Endothelial cell of umbilical vein (primary cell): ENCODE measurements at regions of chr14 and their contacts with region 1.

Region 1: DNA sequence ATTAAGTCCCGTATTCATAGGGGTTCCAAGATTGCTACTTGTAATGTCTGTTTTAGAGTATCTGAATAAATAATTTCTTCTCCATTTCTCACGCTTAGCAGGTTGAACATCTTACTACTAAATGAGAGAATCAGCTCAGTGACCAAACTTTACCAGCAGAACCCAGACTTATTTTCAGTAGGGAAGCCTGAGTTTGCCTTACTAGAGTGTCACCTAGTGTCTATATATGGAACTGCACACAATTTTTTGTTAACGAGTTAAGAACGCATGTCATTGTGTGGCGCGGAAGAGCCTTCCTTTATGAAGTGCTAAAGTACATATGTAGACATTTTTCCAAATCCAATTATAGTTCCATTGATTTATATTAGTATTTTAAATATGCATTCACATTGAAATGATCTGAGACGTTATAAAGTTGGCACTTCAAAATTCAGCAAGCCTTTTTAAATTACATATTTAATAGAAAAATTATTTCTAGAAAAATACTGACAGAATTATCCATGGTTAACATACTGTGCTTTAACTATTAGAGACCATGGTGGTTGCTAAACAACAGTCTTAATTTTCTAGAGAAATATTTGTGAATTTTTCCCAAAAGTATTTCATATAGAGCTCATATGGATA is 88.3 kb downstream of the RPS29 start:
- DNase-seq: peak; percentile 78
- H3K4me3 ChIP-seq: no peak overlapping the region
- H3K27ac ChIP-seq: no peak overlapping the region
- H3K4me1 ChIP-seq: no peaks in the 10 kb centered on the region
- H3K27me3 ChIP-seq: peaks cover 7 to 9% of the 10 kb centered on the region in 2 experiments
- CTCF ChIP-seq: peak; percentile 53 to 63
- POLR2A ChIP-seq: no peak

Region 2: GRCh38 chr14:48350971-48351370 is 1146.9 kb before region 1 on chr14:
- CTCF ChIA-PET with region 1: no interaction called
- POLR2A ChIA-PET with region 1: no interaction called
- dilution Hi-C with region 1: no loop called
- intact Hi-C with region 1: no loop called
- DNase-seq: no peak
- H3K4me3 ChIP-seq: no peak overlapping the region
- H3K27ac ChIP-seq: no peak overlapping the region
- H3K4me1 ChIP-seq: no peaks in the 10 kb centered on the region
- H3K27me3 ChIP-seq: no peaks in the 10 kb centered on the region
- CTCF ChIP-seq: no peak
- POLR2A ChIP-seq: no peak

Region 3: GRCh38 chr14:49173765-49174373 is 324.0 kb before region 1 on chr14:
- CTCF ChIA-PET with region 1: no interaction called
- POLR2A ChIA-PET with region 1: no interaction called
- dilution Hi-C with region 1: no loop called
- intact Hi-C with region 1: no loop called
- DNase-seq: peak; percentile 55
- H3K4me3 ChIP-seq: no peak overlapping the region
- H3K27ac ChIP-seq: no peak overlapping the region
- H3K4me1 ChIP-seq: no peaks in the 10 kb centered on the region
- H3K27me3 ChIP-seq: no peaks in the 10 kb centered on the region
- CTCF ChIP-seq: peak; percentile 42 to 59
- POLR2A ChIP-seq: no peak

Region 4: GRCh38 chr14:49485290-49485689 is 12.5 kb before region 1 on chr14:
- CTCF ChIA-PET with region 1: interaction called, 18 read pairs
- POLR2A ChIA-PET with region 1: no interaction called
- dilution Hi-C with region 1: no loop called
- intact Hi-C with region 1: no loop called
- DNase-seq: no peak
- H3K4me3 ChIP-seq: no peak overlapping the region
- H3K27ac ChIP-seq: no peak overlapping the region
- H3K4me1 ChIP-seq: no peaks in the 10 kb centered on the region
- H3K27me3 ChIP-seq: peaks cover 8 to 13% of the 10 kb centered on the region in 2 experiments
- CTCF ChIP-seq: no peak
- POLR2A ChIP-seq: no peak

Region 5: GRCh38 chr14:49550286-49551184 is 52.7 kb after region 1 on chr14:
- CTCF ChIA-PET with region 1: interaction called, 14 read pairs
- POLR2A ChIA-PET with region 1: no interaction called
- dilution Hi-C with region 1: no loop called
- intact Hi-C with region 1: no loop called
- DNase-seq: peak; percentile 31
- H3K4me3 ChIP-seq: no peak overlapping the region
- H3K27ac ChIP-seq: no peak overlapping the region
- H3K4me1 ChIP-seq: no peaks in the 10 kb centered on the region
- H3K27me3 ChIP-seq: peaks cover 0 to 2% of the 10 kb centered on the region in 2 experiments
- CTCF ChIP-seq: peak in 1 of 2 donors; percentile 8
- POLR2A ChIP-seq: no peak